Activated CD8-positive, alpha-beta memory T cell treated with anti-CD3 and anti-CD28 coated beads, Interleukin-2, amount 10 ng/mL, durations not matched to agents 7 days and 5 days (primary cell): ENCODE measurements at regions of chr1 and their contacts with region 1.

Region 1: DNA sequence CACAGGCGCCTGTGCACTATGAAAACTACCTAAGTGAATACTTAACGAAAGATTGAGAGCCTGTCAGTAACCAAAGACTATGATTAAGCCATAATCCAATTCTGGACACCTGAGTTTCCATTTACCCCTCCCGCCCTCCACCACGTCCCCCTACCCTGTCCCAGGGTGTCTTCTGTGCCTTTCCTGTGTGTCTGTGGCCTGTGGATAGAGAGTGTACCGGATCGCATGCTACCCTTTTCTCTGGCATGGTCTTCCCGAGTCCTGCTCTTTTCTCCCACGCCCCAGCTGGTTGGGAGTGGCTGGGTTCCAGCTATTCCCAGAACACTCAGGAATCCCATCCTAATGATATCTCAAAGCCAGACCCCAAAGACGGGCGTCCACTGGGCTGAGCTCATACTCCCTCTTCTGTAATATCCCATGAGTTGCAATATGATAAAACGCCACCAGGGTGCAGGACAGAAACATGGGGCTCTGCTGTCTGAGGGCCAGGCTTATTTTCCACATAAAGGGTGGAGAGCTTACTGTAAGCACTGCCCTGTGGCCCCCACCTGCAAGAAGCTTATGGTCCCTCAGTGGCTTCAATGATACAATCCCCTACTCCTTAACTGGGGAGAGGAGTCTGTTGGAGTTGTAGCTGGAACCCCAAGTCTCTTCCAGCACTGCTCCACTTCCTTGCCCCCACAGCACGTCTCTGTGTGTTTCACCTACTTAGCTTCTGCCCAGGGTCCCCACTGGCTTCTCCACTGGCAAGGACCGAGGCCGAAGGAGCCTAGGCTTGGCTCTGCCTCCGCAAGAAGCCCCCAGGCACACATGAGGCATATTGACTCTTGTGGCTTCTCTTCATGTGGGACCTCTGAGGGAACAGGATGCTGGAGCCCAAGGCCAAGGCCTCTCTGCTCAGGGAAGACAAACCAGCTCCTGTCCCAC is 17.6 kb upstream of the ALX3 start:
- DNase-seq: peak; percentile 67
- ATAC-seq: peak; percentile 74
- H3K4me3 Mint-ChIP-seq: no peak overlapping the region
- H3K27ac Mint-ChIP-seq: no peak overlapping the region
- H3K4me1 Mint-ChIP-seq: peaks cover 13% of the 10 kb centered on the region
- H3K27me3 Mint-ChIP-seq: peaks cover 57% of the 10 kb centered on the region

Region 2: GRCh38 chr1:110053557-110054428 is 34.3 kb before region 1 on chr1:
- CTCF ChIA-PET with region 1: interaction called, 12 read pairs
- DNase-seq: peak; percentile 74
- ATAC-seq: peak; percentile 81
- H3K4me3 Mint-ChIP-seq: no peak overlapping the region
- H3K27ac Mint-ChIP-seq: no peak overlapping the region
- H3K4me1 Mint-ChIP-seq: no peaks in the 10 kb centered on the region
- H3K27me3 Mint-ChIP-seq: no peaks in the 10 kb centered on the region

Region 3: DNA sequence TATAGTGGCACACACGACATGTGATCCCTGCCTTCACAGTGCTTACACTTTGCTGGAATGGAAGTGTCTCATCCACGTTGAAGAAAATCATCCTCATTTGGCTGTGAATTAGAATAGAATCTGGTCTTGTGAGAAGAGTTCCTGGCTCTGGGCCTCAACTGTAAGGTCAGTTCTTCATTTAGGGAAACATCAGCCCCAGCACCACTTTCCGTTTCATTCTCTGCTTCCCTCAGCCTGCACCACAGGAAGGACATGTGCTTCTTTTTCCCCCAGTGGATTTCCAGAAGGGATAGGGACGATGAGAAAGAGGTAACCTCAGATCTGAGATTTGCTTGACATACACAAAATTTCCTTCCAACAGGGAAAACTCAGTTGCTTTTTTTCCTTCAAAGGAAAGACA is 13.9 kb before region 1 on chr1:
- CTCF ChIA-PET with region 1: interaction called, 10 read pairs
- DNase-seq: no peak
- ATAC-seq: no peak
- H3K4me3 Mint-ChIP-seq: no peak overlapping the region
- H3K27ac Mint-ChIP-seq: no peak overlapping the region
- H3K4me1 Mint-ChIP-seq: no peaks in the 10 kb centered on the region
- H3K27me3 Mint-ChIP-seq: peaks cover 69% of the 10 kb centered on the region

Region 4: DNA sequence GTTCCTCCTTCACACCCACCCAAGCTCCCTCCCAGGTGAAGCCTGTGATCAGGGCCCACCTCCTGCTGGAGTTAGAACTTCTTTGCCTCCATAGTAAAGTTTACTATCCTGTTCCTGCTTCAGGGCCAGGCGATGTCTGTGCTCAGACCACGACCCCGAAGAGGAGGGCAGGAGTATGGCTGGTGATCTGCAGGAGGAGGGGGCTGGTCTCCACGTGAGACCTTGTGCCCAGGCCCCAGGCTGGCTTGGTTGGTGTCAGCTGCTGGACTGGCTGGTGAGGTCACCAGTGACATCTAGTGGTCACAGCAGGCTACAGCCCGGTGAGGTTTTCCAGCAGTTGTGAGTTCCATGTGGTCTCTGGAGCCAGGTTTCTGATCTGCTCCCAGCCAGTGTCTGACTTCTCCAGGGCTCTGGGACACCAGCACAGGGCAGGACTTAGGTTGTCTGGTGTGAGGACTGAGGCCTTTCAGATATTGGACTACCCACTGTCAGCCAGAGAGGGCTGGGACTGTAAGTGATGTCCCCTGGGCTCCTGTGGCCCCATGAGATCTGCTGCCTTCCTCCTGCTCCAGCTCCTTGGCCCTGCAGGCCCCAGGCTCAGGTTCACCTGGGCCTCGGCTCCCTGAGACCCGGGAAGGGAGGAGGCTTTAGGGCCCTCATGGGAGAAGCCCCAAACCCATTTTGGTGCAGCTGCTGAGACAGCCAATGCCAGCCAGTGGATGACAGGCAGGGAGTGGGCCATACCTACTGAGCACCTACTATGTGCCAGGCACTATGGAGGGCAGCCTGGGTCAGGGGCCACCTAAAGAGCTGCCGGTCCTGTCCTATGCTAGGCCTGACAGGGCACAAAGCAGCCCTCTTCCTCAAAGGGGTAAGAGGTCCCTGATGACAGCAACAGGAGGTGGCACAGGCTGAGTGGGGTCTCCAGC is 18.2 kb after region 1 on chr1:
- CTCF ChIA-PET with region 1: interaction called, 106 read pairs
- DNase-seq: peak; percentile 74
- ATAC-seq: peak; percentile 84
- H3K4me3 Mint-ChIP-seq: no peak overlapping the region
- H3K27ac Mint-ChIP-seq: no peak overlapping the region
- H3K4me1 Mint-ChIP-seq: no peaks in the 10 kb centered on the region
- H3K27me3 Mint-ChIP-seq: peaks cover 23% of the 10 kb centered on the region

Region 5: GRCh38 chr1:110118636-110119615 is 30.9 kb after region 1 on chr1:
- CTCF ChIA-PET with region 1: interaction called, 14 read pairs
- DNase-seq: no peak
- ATAC-seq: no peak
- H3K4me3 Mint-ChIP-seq: no peak overlapping the region
- H3K27ac Mint-ChIP-seq: no peak overlapping the region
- H3K4me1 Mint-ChIP-seq: no peaks in the 10 kb centered on the region
- H3K27me3 Mint-ChIP-seq: peaks cover 35% of the 10 kb centered on the region

Region 6: DNA sequence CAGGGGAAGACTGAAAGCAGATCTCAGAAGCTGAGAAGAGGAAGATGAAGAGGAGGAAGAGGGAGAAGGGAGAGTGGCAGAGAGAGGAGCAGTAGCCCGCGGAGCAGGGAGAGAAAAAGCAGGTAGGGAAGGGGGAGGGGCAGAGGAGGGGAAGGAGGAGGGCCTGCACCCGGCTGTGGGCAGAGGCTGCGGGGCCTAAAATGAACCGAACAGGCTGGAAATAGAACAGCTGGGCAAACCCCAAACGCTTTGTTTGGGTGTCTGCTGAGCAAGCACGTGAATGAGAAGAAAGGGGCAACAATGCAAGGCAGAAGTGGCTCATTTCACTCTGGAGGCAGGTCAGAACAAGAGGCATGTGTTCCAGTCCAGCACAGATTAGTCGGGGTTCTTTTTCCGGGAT is 155.5 kb after region 1 on chr1:
- CTCF ChIA-PET with region 1: no interaction called
- DNase-seq: no peak
- ATAC-seq: no peak
- H3K4me3 Mint-ChIP-seq: no peak overlapping the region
- H3K27ac Mint-ChIP-seq: no peak overlapping the region
- H3K4me1 Mint-ChIP-seq: peaks cover 3% of the 10 kb centered on the region
- H3K27me3 Mint-ChIP-seq: no peaks in the 10 kb centered on the region